Activated CD4-positive, alpha-beta memory T cell treated with anti-CD3 and anti-CD28 coated beads for 36 hours (primary cell): ENCODE measurements at regions of chr3 and their contacts with region 1.

Region 1: GRCh38 chr3:108100906-108101660 is 10.3 kb upstream of the CD47 start:
- DNase-seq: peak; percentile 54
- H3K4me3 Mint-ChIP-seq: peak overlapping the region; percentile 20
- H3K27ac Mint-ChIP-seq: peak overlapping the region; percentile 24
- H3K4me1 Mint-ChIP-seq: peaks cover 33% of the 10 kb centered on the region
- H3K27me3 Mint-ChIP-seq: no peaks in the 10 kb centered on the region

Region 2: GRCh38 chr3:108064293-108064887 is 36.7 kb before region 1 on chr3:
- CTCF ChIA-PET with region 1: no interaction called
- POLR2A ChIA-PET with region 1: no interaction called
- intact Hi-C with region 1: loop called (anchors 1 kb)
- DNase-seq: no peak
- H3K4me3 Mint-ChIP-seq: no peak overlapping the region
- H3K27ac Mint-ChIP-seq: peak overlapping the region; percentile 29
- H3K4me1 Mint-ChIP-seq: peaks cover 71% of the 10 kb centered on the region
- H3K27me3 Mint-ChIP-seq: no peaks in the 10 kb centered on the region

Region 3: DNA sequence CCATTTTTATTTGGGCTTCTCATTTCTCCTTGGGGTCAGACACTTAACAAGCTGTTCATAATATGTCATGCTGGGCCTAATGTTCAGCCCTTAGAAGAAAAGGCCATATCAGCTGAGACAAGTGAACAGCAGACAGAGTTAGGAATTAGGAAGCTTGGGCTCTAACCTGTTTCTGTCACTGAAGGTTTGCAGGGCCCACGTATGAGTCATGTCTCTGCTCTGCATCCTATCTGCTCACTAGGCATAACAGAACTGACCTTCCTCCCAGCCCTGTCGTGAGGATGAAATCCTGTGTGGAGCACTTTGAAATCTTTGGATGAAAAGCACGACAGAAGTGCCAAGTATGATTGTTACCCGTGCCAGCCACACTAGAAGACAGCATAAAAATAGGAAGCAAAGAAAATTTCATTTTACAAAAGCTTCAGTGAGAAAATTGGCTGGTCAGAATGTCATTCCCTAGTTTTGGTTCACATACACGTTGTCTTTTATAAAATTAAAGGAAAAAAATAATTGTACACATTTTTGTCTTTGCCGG is 16.2 kb after region 1 on chr3:
- CTCF ChIA-PET with region 1: interaction called, 4 read pairs
- POLR2A ChIA-PET with region 1: no interaction called
- intact Hi-C with region 1: loop called (anchors 1 kb)
- DNase-seq: no peak
- H3K4me3 Mint-ChIP-seq: no peak overlapping the region
- H3K27ac Mint-ChIP-seq: no peak overlapping the region
- H3K4me1 Mint-ChIP-seq: peaks cover 29% of the 10 kb centered on the region
- H3K27me3 Mint-ChIP-seq: no peaks in the 10 kb centered on the region